Cardiac septum (tissue), 1 donor: ENCODE measurements at regions of chr2 and their contacts with region 1.

Region 1: DNA sequence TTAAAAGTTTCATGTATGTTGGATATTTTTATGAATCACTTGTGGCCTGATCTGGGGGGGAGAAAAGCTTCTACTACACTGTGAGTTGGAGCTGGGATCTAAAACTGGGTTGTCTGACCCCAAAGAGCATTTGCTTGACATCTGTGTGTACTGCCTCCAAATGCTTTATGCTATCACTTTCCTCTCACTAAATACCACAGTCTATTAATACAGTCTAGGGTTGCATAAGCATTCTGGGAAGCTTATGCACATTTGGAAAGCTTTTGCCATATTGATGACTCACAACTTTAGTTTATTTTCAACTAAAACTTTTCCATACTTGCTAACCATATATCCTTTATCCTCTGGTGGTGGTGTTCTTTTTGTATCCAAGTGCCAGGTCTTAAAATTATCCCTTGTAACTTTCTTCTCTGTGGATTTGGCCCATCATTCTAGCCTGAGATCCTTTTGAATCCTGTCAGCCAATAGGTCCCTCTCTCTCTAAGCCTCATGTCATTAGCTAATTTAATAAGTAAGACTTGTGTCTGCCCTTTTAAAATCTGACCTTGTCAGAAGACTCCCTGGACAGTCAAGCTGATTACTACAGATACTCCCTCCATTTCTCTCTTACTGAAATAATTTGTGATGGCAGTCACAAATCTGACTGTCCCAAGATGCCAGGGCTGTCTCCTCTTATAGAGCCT is 72.7 kb downstream of the NXPH2 start:
- DNase-seq: no peak

Region 2: GRCh38 chr2:138501425-138502283 is 205.9 kb before region 1 on chr2 and contains the start of gene SPOPL:
- intact Hi-C with region 1: loop called (anchors 10 kb)
- DNase-seq: peak; percentile 97
- total RNA-seq, gene SPOPL: 15.4 TPM